HEK293 (cell line): ENCODE measurements at regions of chr13 and their contacts with region 1.

Region 1: GRCh38 chr13:41222259-41222852 is 28.0 kb upstream of the KBTBD7 start:
- H3K4me3 ChIP-seq: no peak overlapping the region
- H3K27ac ChIP-seq: no peak overlapping the region
- H3K4me1 ChIP-seq: no peaks in the 10 kb centered on the region
- CTCF ChIP-seq: no peak

Region 2: GRCh38 chr13:41074523-41074922 is 147.8 kb before region 1 on chr13:
- CTCF ChIA-PET with region 1: interaction called, 11 read pairs
- POLR2A ChIA-PET with region 1: no interaction called
- H3K4me3 ChIP-seq: no peak overlapping the region
- H3K27ac ChIP-seq: no peak overlapping the region
- H3K4me1 ChIP-seq: no peaks in the 10 kb centered on the region
- CTCF ChIP-seq: no peak

Region 3: DNA sequence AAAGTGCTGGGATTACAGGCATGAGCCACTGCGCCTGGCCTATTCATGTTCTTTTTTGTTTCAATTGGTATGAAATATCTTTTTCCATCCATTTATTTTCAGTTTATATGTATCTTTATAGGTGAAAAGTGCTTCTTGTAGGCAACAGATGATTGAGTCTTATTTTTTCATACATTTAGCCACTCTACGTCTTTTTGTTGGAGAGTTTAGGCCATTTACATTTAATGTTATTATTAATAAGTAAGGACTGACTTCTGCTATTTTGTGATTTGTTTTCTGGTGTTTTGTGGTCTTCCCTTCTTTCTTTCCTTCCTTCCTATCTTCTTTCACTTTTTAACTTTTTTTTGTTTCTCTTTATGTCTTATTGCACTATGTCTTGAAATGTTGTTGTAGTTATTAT is 11.3 kb before region 1 on chr13:
- CTCF ChIA-PET with region 1: no interaction called
- POLR2A ChIA-PET with region 1: no interaction called
- H3K4me3 ChIP-seq: no peak overlapping the region
- H3K27ac ChIP-seq: no peak overlapping the region
- H3K4me1 ChIP-seq: no peaks in the 10 kb centered on the region
- CTCF ChIP-seq: no peak